ENCODE measurements at regions of chr11 and their contacts with region 1.

Region 1: GRCh38 chr11:68206187-68206601 is 6.9 kb downstream of the KMT5B start:
- DNase-seq: peak in 2 of 4 donors; percentile 25 to 51
- ATAC-seq: peak; percentile 51
- H3K4me3 ChIP-seq: no peak overlapping the region
- H3K27ac ChIP-seq: no peak overlapping the region
- H3K4me1 ChIP-seq: peaks cover 75% of the 10 kb centered on the region
- H3K27me3 ChIP-seq: no peaks in the 10 kb centered on the region
- CTCF ChIP-seq: peak; percentile 58 to 86 (median 75)
- POLR2A ChIP-seq: no peak

Region 2: GRCh38 chr11:68150039-68150438 is 56.2 kb before region 1 on chr11:
- intact Hi-C with region 1: loop called (anchors 10 kb)
- DNase-seq: peak; percentile 78 to 93 (median 90)
- ATAC-seq: peak; percentile 31
- H3K4me3 ChIP-seq: no peak overlapping the region
- H3K27ac ChIP-seq: peak overlapping the region in 3 of 4 donors; percentile 48 to 71 (median 57)
- H3K4me1 ChIP-seq: peaks cover 62% of the 10 kb centered on the region
- H3K27me3 ChIP-seq: no peaks in the 10 kb centered on the region
- CTCF ChIP-seq: no peak
- POLR2A ChIP-seq: peak in 2 of 3 donors; percentile 13 to 22

Region 3: DNA sequence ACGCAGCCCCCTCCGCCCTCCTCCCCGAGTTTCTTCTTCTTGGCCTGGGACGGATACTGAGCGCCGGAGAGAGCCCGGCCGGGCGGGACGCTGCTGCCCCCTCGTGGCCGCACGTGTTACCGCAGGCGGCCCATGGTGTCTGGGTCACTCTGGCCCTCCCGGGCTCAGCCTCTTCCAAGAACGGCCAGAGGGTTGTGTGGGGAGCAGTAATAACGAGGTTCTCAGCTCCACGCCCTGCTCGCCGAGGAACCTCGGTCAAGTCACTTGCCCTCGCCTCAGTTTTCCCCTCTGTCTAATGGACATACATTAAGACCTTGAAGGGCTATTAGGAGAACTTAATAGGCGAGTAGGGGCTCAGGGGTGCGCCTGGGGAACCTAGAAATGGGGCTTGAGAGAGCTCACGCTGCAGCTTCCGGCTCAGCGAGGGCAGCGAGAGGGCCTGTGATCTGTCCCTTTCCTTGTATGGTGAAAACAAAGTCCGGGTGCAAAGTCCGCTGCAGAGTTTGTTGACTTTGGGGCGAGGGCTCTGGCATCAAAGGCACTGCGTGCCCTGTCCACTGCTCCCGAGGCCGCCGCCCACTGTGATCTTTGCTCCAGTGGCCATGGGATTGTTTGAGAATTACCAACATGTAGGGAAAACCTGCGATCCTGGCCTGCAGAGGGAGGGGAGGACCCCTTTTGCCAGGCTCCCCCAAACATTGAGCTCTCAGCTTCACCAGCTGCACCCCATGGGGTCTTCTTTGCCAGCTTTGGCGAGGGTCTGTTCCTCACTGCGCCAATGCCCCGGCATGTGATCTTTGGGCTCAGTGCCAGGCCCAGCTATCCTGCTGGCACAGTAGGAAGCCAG is 91.8 kb after region 1 on chr11:
- intact Hi-C with region 1: no loop called
- DNase-seq: peak; percentile 81 to 85 (median 84)
- ATAC-seq: peak; percentile 92
- H3K4me3 ChIP-seq: no peak overlapping the region
- H3K27ac ChIP-seq: peak overlapping the region; percentile 46 to 92 (median 76)
- H3K4me1 ChIP-seq: peaks cover 19% of the 10 kb centered on the region
- H3K27me3 ChIP-seq: no peaks in the 10 kb centered on the region
- CTCF ChIP-seq: peak; percentile 96 to 100 (median 98)
- POLR2A ChIP-seq: peak in 2 of 3 donors; percentile 41 to 55